AG04449 (cell line): ENCODE measurements at regions of chr12 and their contacts with region 1.

Region 1: DNA sequence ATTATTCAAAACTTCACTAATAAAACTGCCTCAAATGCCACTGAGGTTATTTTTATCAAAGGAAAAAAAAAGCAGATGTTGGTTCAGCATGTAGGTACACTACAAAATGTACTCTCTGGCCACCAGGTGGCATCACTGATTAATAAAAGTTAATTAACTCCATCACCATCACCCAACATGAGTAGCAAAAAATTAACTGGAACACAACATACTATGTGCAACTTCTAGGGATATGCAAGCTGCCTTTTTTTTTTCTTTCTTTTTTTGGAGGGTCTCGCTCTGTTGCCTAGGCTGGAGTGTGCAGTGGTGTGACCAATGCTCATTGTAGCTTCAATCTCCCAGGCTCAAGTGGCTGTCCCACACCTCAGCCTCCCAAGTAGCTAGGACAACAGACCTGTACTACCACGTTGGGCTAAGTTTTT is 43.8 kb upstream of the NR2C1 start:
- DNase-seq: no peak
- H3K4me3 ChIP-seq: no peak overlapping the region
- CTCF ChIP-seq: peak; percentile 35

Region 2: GRCh38 chr12:95130096-95130495 is 12.9 kb after region 1 on chr12:
- CTCF ChIA-PET with region 1: interaction called, 13 read pairs
- POLR2A ChIA-PET with region 1: no interaction called
- DNase-seq: no peak
- H3K4me3 ChIP-seq: no peak overlapping the region
- CTCF ChIP-seq: no peak

Region 3: GRCh38 chr12:95147866-95148265 is 30.7 kb after region 1 on chr12:
- CTCF ChIA-PET with region 1: no interaction called
- POLR2A ChIA-PET with region 1: no interaction called
- DNase-seq: no peak
- H3K4me3 ChIP-seq: no peak overlapping the region
- CTCF ChIP-seq: no peak

Region 4: GRCh38 chr12:95224202-95225170 is 107.3 kb after region 1 on chr12:
- CTCF ChIA-PET with region 1: interaction called, 18 read pairs
- POLR2A ChIA-PET with region 1: no interaction called
- DNase-seq: no peak
- H3K4me3 ChIP-seq: no peak overlapping the region
- CTCF ChIP-seq: no peak

Region 5: GRCh38 chr12:95326445-95326844 is 209.3 kb after region 1 on chr12:
- CTCF ChIA-PET with region 1: interaction called, 142 read pairs
- POLR2A ChIA-PET with region 1: no interaction called
- DNase-seq: no peak
- H3K4me3 ChIP-seq: no peak overlapping the region
- CTCF ChIP-seq: no peak

Region 6: GRCh38 chr12:95532851-95533250 is 415.7 kb after region 1 on chr12:
- CTCF ChIA-PET with region 1: interaction called, 26 read pairs
- POLR2A ChIA-PET with region 1: no interaction called
- DNase-seq: no peak
- H3K4me3 ChIP-seq: no peak overlapping the region
- CTCF ChIP-seq: no peak